ENCODE measurements at regions of chr1 and their contacts with region 1.

Region 1: GRCh38 chr1:63367215-63368103 is at the start of gene ALG6:
- DNase-seq: peak; percentile 94
- H3K4me3 Mint-ChIP-seq: peak within 1 kb of the TSS; percentile 97
- H3K27ac Mint-ChIP-seq: peak within 1 kb of the TSS; percentile 74
- H3K4me1 Mint-ChIP-seq: peaks cover 21% of the 10 kb centered on the region
- H3K27me3 Mint-ChIP-seq: peaks cover 3% of the 10 kb centered on the region
- total RNA-seq, gene ALG6: 16.0 to 18.8 TPM

Region 2: DNA sequence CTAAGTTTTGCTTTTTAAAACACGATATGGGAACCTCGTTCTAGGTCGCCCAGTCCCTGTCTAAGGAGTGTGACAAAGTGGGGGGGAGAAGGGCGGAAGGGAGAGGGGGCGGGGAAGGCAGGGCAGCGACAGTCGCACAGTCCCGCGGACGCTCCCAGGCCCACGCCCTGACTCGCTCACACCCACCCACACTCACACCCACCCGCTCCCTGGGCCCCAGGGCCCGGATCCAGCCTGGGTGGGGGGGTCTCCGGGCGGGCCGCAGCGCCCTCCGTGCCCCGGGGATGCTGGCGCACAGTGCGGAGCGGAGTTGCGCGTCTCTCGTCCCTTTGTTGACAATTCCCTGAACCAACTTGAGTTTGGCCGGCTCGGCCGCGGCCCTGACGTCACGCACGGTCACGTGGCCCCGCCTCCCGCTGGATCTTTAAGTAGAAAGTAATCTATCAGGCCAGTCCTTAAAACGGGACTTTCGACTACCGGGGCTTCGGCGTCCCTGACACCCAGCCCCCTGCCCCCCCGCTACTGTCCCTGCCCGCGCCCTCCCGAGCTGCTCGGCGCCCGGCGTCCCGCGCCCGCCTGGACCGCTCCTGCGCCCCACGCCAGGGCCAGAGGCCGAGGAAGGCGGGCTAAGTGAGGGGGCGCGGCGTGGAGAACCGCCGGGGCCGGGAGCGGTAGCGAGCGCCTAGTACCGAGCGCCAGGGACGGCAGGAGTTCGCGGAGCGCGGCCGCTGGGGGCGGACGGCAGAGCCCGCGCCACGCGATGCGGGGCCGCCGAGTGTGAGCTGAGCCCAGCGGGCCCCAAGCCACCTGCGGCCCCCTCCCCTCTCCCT is 45.1 kb before region 1 on chr1 and contains the start of gene FOXD3:
- CTCF ChIA-PET with region 1: interaction called, 4 read pairs
- POLR2A ChIA-PET with region 1: no interaction called
- intact Hi-C with region 1: loop called (anchors 2 kb)
- DNase-seq: peak; percentile 58
- H3K4me3 Mint-ChIP-seq: peak within 1 kb of the TSS; percentile 74
- H3K27ac Mint-ChIP-seq: peak within 1 kb of the TSS; percentile 53
- H3K4me1 Mint-ChIP-seq: peaks cover 39% of the 10 kb centered on the region
- H3K27me3 Mint-ChIP-seq: peaks cover 75% of the 10 kb centered on the region
- total RNA-seq, gene FOXD3: not detected

Region 3: DNA sequence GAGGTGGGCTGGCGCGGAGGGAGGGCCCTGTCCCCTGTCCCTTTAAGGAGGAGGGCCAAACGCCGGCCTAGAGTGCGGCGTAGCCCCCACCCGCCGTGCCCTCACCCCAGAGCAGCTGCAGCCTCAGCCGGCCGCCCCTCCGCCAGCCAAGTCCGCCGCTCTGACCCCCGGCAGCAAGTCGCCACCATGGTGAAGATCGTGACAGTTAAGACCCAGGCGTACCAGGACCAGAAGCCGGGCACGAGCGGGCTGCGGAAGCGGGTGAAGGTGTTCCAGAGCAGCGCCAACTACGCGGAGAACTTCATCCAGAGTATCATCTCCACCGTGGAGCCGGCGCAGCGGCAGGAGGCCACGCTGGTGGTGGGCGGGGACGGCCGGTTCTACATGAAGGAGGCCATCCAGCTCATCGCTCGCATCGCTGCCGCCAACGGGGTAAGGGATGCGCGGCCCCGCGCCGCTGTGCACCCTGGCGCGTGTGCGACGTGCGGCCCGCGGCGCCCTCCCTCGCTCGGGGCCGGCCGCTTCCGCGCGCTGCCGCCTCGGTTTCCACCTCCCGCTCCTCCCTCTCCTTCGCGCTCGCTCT is 225.9 kb after region 1 on chr1 and contains the start of gene PGM1:
- CTCF ChIA-PET with region 1: no interaction called
- POLR2A ChIA-PET with region 1: no interaction called
- intact Hi-C with region 1: loop called (anchors 1 kb)
- DNase-seq: peak; percentile 84
- H3K4me3 Mint-ChIP-seq: peak within 1 kb of the TSS; percentile 95
- H3K27ac Mint-ChIP-seq: peak within 1 kb of the TSS; percentile 98
- H3K4me1 Mint-ChIP-seq: peaks cover 28% of the 10 kb centered on the region
- H3K27me3 Mint-ChIP-seq: no peaks in the 10 kb centered on the region
- total RNA-seq, gene PGM1: 31.9 to 32.4 TPM